Activated B cell treated with CpG ODN at 0.5 μM for 24 hours (primary cell): ENCODE measurements at regions of chr6 and their contacts with region 1.

Region 1: DNA sequence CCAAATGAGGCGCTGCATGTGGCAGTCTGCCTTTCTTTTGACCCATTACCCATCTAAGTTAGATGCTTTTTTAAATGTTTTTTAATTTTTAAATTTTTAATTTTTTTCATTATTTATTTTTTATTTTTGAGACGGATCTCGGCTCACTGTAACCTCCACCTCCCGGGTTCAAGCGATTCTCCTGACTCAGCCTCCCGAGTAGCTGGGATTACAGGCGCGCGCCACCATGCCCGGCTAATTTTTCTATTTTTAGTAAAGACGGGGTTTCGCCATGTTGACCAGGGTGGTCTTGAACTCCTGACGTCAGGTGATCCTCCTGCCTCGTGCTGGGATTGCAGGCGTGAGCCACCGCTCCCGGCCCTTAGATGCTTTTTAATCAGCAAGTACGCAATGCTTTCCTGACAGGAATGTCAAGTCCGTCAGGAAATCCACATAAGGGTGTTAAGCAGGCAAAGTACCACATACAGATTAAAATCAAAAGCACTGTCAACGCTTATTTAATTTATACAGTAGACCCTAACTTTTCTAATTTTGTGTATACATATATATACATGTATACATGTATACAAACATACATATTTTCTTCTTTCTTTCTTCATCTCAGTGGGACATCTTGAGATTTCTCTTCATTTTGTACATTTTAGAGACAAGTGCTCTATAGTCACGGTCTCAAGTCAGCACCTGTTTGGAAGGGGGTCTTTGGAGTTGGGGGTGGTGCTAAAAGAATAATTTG is 995 bp upstream of the GSTA4 start:
- DNase-seq: peak; percentile 27
- ATAC-seq: no peak
- H3K4me3 Mint-ChIP-seq: peak overlapping the region; percentile 94
- H3K27ac Mint-ChIP-seq: peak overlapping the region; percentile 99
- H3K4me1 Mint-ChIP-seq: peaks cover 27% of the 10 kb centered on the region
- H3K27me3 Mint-ChIP-seq: peaks cover 5% of the 10 kb centered on the region
- CTCF ChIP-seq: no peak

Region 2: GRCh38 chr6:52284460-52285176 is 711.5 kb before region 1 on chr6 and contains the start of gene MCM3:
- CTCF ChIA-PET with region 1: interaction called, 3 read pairs
- POLR2A ChIA-PET with region 1: interaction called, 3 read pairs
- intact Hi-C with region 1: loop called (anchors 5 kb)
- DNase-seq: peak; percentile 83
- ATAC-seq: peak; percentile 98
- H3K4me3 Mint-ChIP-seq: peak within 1 kb of the TSS; percentile 58
- H3K27ac Mint-ChIP-seq: no peak within 1 kb of the TSS
- H3K4me1 Mint-ChIP-seq: peaks cover 20% of the 10 kb centered on the region
- H3K27me3 Mint-ChIP-seq: no peaks in the 10 kb centered on the region
- CTCF ChIP-seq: no peak
- total RNA-seq, gene MCM3: 73.2 and 78.9 TPM in 2 replicates

Region 3: DNA sequence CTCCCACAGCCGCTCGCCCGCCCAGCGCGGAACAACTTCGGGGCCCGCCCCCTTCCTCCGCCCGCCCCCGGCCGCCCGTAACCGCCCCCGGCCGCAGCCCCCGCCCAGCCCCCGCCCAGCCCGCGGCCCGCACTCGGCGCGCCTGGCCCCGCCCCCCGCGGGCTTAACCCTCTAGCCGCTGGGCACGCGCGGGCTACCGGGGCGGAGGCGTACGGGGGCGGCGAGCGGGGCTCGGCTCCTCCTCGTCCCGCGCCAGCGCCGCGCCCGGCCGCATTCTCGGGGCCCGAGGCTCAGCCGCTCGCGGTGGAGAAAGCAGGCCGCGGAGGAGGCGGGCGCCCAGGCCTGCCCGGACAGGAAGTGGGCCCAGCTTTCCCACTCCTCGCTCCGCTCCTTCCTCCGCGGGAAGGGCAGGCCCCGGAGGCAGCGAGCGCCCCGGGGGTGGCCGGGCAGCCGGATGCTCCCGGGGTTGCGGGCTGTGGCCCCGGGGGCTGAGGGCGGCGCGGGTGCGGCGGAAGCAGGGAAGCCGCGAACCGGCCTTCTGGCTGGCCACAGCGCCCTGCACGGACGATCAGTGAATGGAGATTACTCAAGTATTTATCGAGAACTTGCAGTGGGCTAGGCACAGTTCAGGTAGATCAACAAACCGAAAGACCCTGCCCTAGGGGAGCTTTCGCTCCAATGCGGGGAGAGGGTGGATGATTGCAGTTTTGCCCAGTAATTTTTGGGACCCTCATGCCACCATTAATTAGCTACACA is 418.9 kb before region 1 on chr6 and contains the start of gene TRAM2:
- CTCF ChIA-PET with region 1: no interaction called
- POLR2A ChIA-PET with region 1: no interaction called
- intact Hi-C with region 1: loop called (anchors 1 kb)
- DNase-seq: peak; percentile 88
- ATAC-seq: peak; percentile 85
- H3K4me3 Mint-ChIP-seq: peak within 1 kb of the TSS; percentile 87
- H3K27ac Mint-ChIP-seq: peak within 1 kb of the TSS; percentile 83
- H3K4me1 Mint-ChIP-seq: peaks cover 46% of the 10 kb centered on the region
- H3K27me3 Mint-ChIP-seq: no peaks in the 10 kb centered on the region
- CTCF ChIP-seq: no peak
- total RNA-seq, gene TRAM2: 9.1 and 9.9 TPM in 2 replicates

Region 4: DNA sequence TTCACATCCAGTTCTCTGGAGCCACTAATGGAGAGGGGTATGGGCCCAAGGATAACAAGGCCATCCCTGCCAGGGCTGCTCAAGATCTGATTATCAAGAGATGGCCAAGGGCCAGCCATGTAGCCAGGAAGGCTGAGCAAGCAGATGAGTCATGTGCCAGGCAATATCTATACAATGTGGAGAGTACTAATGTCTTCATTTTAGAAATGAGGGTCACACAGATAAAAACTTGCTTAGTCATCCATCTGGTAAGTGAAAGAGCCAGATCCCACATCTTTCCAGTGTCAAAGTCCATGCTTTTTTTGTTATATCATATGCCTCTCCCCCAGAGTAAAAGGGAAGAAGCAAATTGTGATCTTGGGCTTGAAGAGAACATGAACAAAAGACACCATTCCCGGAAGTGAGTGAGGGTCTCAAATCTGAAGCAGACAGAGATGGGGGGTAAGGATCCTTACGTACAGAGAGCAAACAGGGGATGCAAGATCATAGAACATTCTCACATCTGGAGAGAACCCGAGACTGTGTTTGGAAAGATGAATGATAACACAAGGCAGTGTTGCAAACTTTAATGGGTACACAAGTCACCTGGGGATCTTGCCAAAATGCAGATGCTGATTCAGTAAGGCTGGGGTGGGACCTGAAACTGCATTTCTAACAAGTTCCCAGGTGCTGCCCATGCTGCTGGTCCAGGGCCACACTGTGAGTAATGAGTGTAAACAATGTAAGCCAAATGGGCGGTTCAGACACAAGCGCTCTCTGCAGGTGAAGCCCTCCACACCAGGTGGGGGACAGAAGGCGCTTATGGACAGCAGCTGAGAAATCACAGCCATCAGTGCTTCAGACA is 66.5 kb before region 1 on chr6:
- CTCF ChIA-PET with region 1: no interaction called
- POLR2A ChIA-PET with region 1: no interaction called
- intact Hi-C with region 1: no loop called
- DNase-seq: no peak
- ATAC-seq: no peak
- H3K4me3 Mint-ChIP-seq: no peak overlapping the region
- H3K27ac Mint-ChIP-seq: no peak overlapping the region
- H3K4me1 Mint-ChIP-seq: no peaks in the 10 kb centered on the region
- H3K27me3 Mint-ChIP-seq: peaks cover 10% of the 10 kb centered on the region
- CTCF ChIP-seq: no peak

Region 5: DNA sequence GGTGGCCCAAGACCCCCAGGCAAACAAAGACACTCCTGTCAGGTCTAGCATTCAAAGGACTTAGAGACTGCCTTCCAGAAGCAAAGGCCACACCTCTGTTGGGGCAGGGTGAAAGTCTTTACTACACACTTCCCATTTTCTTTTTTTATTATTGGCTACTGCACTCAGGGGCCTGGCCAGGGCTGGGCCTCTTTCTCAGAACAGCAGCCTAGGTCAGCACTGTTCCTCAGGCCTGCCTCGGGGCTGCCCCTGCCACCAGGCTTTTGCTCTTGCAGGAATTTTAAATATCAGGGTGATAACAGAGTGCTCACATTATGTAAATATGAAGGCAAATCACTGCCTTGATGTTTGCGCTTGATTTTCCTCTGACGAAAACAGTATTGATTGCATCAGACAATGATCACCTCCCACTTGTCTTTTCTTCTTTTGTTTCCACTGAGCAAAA is 19.5 kb before region 1 on chr6:
- CTCF ChIA-PET with region 1: no interaction called
- POLR2A ChIA-PET with region 1: interaction called, 6 read pairs
- intact Hi-C with region 1: loop called (anchors 1 kb)
- DNase-seq: no peak
- ATAC-seq: peak; percentile 87
- H3K4me3 Mint-ChIP-seq: no peak overlapping the region
- H3K27ac Mint-ChIP-seq: peak overlapping the region; percentile 66
- H3K4me1 Mint-ChIP-seq: peaks cover 37% of the 10 kb centered on the region
- H3K27me3 Mint-ChIP-seq: no peaks in the 10 kb centered on the region
- CTCF ChIP-seq: no peak

Region 6: GRCh38 chr6:53074347-53074746 is 78.3 kb after region 1 on chr6:
- CTCF ChIA-PET with region 1: no interaction called
- POLR2A ChIA-PET with region 1: no interaction called
- intact Hi-C with region 1: no loop called
- DNase-seq: no peak
- ATAC-seq: no peak
- H3K4me3 Mint-ChIP-seq: no peak overlapping the region
- H3K27ac Mint-ChIP-seq: no peak overlapping the region
- H3K4me1 Mint-ChIP-seq: peaks cover 8% of the 10 kb centered on the region
- H3K27me3 Mint-ChIP-seq: no peaks in the 10 kb centered on the region
- CTCF ChIP-seq: no peak

Region 7: DNA sequence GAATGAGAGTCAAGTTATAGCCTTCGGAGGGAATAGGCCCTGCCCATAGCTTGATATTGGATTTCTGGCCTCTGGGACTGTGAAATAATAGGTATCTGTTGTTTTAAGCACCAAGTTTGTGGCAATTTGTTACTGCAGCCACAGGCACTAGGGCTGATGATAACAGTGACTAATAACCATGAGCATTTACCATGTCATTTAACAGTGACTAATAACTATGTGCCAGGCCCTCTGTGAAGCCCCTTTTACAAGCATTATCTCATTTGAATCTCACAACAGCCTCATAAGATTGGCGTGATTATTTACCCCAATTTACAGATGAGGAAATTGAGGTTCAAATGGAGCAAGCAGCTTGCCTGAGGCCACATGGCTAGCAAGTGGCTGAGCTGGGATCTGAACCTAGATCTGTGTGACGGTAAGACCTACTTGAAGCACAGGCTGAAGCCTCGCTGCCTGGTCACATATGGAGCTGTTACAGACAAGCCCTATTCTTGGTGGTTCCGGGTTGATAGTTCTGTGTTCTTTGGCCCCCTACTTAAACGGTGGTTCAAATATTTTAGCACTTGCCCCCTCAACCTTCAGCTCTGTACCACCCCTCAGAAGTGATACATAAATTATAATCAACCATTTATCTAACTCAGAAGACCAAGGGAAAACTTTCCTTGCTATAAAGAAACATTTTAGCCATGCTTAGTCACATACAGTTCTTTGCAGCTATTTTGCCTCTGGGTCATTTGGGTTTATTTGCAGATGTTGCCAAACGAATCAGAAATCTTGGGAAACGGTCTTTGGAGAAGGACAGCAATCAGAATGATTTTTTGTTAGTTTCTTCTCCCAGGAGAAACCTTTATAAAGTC is 254.3 kb after region 1 on chr6:
- CTCF ChIA-PET with region 1: no interaction called
- POLR2A ChIA-PET with region 1: no interaction called
- intact Hi-C with region 1: loop called (anchors 10 kb)
- DNase-seq: no peak
- ATAC-seq: peak; percentile 77
- H3K4me3 Mint-ChIP-seq: peak overlapping the region; percentile 17
- H3K27ac Mint-ChIP-seq: peak overlapping the region; percentile 88
- H3K4me1 Mint-ChIP-seq: peaks cover 82% of the 10 kb centered on the region
- H3K27me3 Mint-ChIP-seq: no peaks in the 10 kb centered on the region
- CTCF ChIP-seq: no peak

Region 8: DNA sequence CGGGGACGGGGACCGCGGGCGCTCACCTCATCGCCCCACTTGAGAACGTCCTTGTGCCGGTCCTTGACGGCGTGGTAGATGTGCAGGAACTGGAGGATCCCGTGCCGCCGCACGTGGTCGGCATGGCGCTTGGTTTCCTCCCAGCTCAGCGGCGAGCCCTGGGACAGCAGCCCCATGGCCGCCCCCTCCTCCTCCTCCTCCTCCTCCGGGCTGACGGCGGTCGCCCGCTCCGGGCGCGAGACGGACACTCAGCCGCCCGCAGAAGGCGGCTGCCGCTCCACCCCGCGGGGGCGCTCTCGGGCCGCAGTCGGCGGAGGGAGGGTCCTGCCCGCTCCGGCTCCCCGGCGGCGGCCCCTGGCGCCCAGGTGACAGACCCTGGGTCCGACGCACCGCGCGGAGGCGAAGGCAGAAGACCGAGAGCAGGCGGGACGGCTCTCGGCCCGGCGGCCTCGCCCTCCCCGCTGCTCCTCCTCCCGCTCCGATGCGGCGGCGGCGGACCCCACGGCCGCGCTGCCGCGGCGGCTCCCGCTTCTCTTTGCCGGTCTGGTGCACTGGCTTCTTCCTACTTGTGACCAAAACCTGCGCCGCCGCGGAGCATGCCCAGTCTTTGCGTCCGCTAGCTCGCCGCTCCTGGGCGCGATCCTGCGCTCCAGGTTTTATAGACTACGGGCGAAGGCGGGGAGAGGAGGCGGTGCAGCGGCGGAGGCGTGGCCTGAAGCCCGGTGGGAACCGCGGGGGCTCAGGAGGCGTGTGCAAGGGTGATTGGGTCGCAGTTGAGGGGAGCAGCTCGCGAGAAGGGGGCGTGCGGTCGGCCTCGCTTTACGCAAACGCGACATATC is 548.6 kb after region 1 on chr6 and contains the start of gene GCLC:
- CTCF ChIA-PET with region 1: interaction called, 4 read pairs
- POLR2A ChIA-PET with region 1: no interaction called
- intact Hi-C with region 1: loop called (anchors 1 kb)
- DNase-seq: peak; percentile 87
- ATAC-seq: peak; percentile 71
- H3K4me3 Mint-ChIP-seq: peak within 1 kb of the TSS; percentile 93
- H3K27ac Mint-ChIP-seq: peak within 1 kb of the TSS; percentile 91
- H3K4me1 Mint-ChIP-seq: peaks cover 67% of the 10 kb centered on the region
- H3K27me3 Mint-ChIP-seq: no peaks in the 10 kb centered on the region
- CTCF ChIP-seq: peak; percentile 37
- total RNA-seq, gene GCLC: 26.6 and 27.1 TPM in 2 replicates

Region 9: GRCh38 chr6:53556986-53557715 is 561.1 kb after region 1 on chr6:
- CTCF ChIA-PET with region 1: no interaction called
- POLR2A ChIA-PET with region 1: no interaction called
- intact Hi-C with region 1: no loop called
- DNase-seq: no peak
- ATAC-seq: no peak
- H3K4me3 Mint-ChIP-seq: no peak overlapping the region
- H3K27ac Mint-ChIP-seq: no peak overlapping the region
- H3K4me1 Mint-ChIP-seq: peaks cover 3% of the 10 kb centered on the region
- H3K27me3 Mint-ChIP-seq: no peaks in the 10 kb centered on the region
- CTCF ChIP-seq: no peak